ENCODE measurements at regions of chr3 and their contacts with region 1.

Region 1: GRCh38 chr3:112531358-112531781 is 30.4 kb downstream of the ATG3 start:
- DNase-seq: peak; percentile 3
- ATAC-seq: no peak
- H3K4me3 ChIP-seq: no peak overlapping the region
- H3K27ac ChIP-seq: no peak overlapping the region
- H3K4me1 ChIP-seq: no peaks in the 10 kb centered on the region
- H3K27me3 ChIP-seq: no peaks in the 10 kb centered on the region
- CTCF ChIP-seq: peak; percentile 39
- EP300 ChIP-seq: no peak
- POLR2A ChIP-seq: no peak
- RAD21 ChIP-seq: no peak

Region 2: DNA sequence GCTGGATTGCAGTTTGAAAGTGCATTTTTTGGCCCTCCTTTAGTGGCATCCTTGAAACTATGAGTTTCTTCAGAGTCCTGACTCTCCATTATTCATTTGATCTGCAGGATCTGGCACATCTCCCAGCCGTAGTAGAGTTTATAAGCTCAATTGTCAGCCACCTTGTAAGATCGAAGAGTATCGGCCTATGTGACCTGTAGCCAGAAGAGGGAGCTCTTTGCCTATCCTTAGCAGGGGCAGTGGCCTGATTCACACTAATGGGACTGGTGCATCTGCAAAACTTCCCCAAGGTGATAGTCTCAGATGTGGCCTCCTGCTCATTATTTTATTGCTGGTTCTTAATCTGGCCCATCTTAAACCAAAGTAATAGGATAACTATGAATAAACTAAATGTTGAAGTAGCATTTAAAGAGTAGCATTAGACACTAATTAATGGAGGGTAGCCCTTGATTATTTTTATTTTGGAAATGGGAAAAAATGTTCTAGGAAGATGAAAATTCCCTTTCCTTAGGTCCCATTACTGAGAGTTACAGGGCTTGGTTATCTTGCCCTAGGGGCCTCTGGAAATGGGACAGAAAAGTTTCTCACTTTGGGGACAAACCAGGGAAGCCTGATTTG is 419.5 kb before region 1 on chr3:
- CTCF ChIA-PET with region 1: interaction called, 6 read pairs
- POLR2A ChIA-PET with region 1: no interaction called
- in situ Hi-C with region 1: loop called (anchors 10 kb)
- intact Hi-C with region 1: no loop called
- DNase-seq: peak; percentile 33
- ATAC-seq: peak; percentile 95
- H3K4me3 ChIP-seq: no peak overlapping the region
- H3K27ac ChIP-seq: no peak overlapping the region
- H3K4me1 ChIP-seq: peaks cover 9% of the 10 kb centered on the region
- H3K27me3 ChIP-seq: no peaks in the 10 kb centered on the region
- CTCF ChIP-seq: peak; percentile 83
- EP300 ChIP-seq: no peak
- POLR2A ChIP-seq: no peak
- RAD21 ChIP-seq: no peak

Region 3: GRCh38 chr3:112136959-112137693 is 394.2 kb before region 1 on chr3:
- CTCF ChIA-PET with region 1: interaction called, 7 read pairs
- POLR2A ChIA-PET with region 1: no interaction called
- in situ Hi-C with region 1: no loop called
- intact Hi-C with region 1: loop called (anchors 1 kb)
- DNase-seq: peak; percentile 42
- ATAC-seq: peak; percentile 87
- H3K4me3 ChIP-seq: no peak overlapping the region
- H3K27ac ChIP-seq: no peak overlapping the region
- H3K4me1 ChIP-seq: no peaks in the 10 kb centered on the region
- H3K27me3 ChIP-seq: no peaks in the 10 kb centered on the region; a peak in 1 of 5 replicates
- CTCF ChIP-seq: peak; percentile 70
- EP300 ChIP-seq: no peak
- POLR2A ChIP-seq: no peak
- RAD21 ChIP-seq: 0 out of 2 replicates have a peak, but pooled peaks have one; percentile 29

Region 4: DNA sequence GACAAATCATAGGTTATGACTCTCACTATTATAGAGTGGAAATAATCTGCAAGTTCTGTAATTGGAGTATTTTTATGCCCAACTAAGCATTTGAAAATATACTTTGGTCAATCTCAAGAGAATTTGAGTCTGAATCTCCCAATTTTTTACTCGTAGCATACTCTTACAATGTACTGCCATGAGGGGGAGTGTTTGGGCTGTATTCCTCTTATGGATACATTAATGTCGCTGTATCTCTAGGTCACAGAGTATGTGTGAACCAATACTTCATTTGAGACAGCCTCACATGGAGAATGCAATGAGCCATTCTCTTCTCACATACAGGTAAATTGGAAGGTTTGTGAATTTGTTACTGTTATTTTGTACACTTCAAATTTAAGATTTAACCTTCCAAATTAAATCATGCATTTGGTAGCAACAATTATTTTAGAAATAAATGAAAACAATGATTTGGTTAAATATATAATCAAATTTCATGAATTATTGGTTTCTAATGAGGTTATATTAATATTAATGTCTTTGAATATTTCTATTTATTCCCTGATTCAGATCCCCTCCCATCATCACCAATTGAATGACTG is 203.9 kb before region 1 on chr3:
- CTCF ChIA-PET with region 1: no interaction called
- POLR2A ChIA-PET with region 1: no interaction called
- in situ Hi-C with region 1: loop called (anchors 10 kb)
- intact Hi-C with region 1: loop called (anchors 5 kb)
- DNase-seq: peak; percentile 39
- ATAC-seq: peak; percentile 94
- H3K4me3 ChIP-seq: no peak overlapping the region
- H3K27ac ChIP-seq: no peak overlapping the region
- H3K4me1 ChIP-seq: no peaks in the 10 kb centered on the region
- H3K27me3 ChIP-seq: no peaks in the 10 kb centered on the region
- CTCF ChIP-seq: peak; percentile 41
- EP300 ChIP-seq: no peak
- POLR2A ChIP-seq: no peak
- RAD21 ChIP-seq: peak; percentile 42; the same call in 1 of the 2 replicates

Region 5: DNA sequence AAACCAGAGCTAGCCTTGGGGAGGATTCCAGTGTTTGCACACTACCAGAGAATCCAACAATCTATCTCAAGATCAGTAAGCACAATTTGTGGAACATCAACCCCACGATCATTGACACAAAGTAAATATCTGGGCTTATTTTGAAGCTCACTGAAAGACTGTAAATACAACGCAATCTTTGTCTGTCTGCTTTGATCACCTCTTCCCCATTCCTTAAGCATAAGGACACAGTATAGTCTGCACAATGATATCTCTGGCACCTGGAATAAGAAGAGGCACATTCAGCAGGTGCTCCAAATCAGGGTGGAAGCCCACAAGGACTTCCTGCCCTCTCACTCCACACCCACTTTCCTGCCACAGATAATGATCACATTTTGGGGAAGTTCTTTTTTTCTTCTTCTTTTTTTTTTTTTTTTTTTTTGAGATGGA is 58.1 kb before region 1 on chr3:
- CTCF ChIA-PET with region 1: no interaction called
- POLR2A ChIA-PET with region 1: no interaction called
- in situ Hi-C with region 1: no loop called
- intact Hi-C with region 1: no loop called
- DNase-seq: peak; percentile 70
- ATAC-seq: peak; percentile 78
- H3K4me3 ChIP-seq: no peak overlapping the region
- H3K27ac ChIP-seq: no peak overlapping the region
- H3K4me1 ChIP-seq: peaks cover 20% of the 10 kb centered on the region
- H3K27me3 ChIP-seq: no peaks in the 10 kb centered on the region
- CTCF ChIP-seq: no peak
- EP300 ChIP-seq: no peak
- POLR2A ChIP-seq: no peak
- RAD21 ChIP-seq: no peak

Region 6: DNA sequence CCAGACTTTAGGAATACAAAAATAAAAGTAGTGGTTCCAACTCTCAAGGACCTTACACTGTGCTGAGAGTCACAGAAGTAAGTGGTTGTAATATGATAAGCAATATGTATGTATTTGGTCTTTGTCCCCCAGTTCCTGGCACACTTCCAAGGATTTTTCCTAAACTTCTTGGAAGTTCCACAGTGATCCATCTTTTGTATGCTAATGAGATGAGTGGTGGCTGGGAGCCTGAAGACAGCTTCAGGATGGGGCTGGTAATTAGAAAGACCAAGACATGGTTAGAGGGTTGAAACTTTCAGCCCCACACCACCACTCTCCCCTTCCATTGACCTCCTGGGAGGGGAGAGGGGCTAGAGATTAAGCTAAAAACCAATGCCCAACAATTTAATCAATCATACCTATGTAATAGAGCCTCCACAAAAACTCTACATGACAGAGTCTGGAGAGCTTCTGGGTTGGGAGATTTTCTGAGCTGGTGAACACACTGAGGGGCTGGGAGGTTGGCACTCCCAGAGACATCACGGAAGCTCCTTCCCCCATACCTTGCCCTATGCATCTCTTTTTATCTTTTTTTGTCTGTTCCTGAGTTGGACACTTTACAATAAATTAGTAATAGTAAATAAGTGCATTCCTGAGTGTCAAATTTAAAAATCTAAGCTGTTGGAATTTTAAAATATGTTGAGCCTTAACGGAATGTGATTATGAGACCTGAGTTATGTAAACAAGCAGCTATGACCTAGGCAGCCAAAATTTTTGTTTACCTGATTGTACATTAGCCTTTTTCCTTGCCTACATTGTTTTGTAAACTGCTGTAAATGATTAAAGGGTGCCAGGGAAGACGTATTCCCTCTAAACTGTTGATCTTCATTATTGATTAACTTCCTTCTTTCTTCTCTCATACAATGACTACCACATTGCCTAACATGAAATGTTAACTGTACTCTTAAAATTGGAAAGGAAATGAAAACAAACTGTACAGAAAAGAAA is 291.0 kb after region 1 on chr3:
- CTCF ChIA-PET with region 1: no interaction called
- POLR2A ChIA-PET with region 1: no interaction called
- in situ Hi-C with region 1: no loop called
- intact Hi-C with region 1: no loop called
- DNase-seq: no peak
- ATAC-seq: peak; percentile 70
- H3K4me3 ChIP-seq: no peak overlapping the region
- H3K27ac ChIP-seq: no peak overlapping the region
- H3K4me1 ChIP-seq: peaks cover 12% of the 10 kb centered on the region; the same call in 1 of the 2 replicates
- H3K27me3 ChIP-seq: no peaks in the 10 kb centered on the region
- CTCF ChIP-seq: no peak
- EP300 ChIP-seq: no peak
- POLR2A ChIP-seq: no peak
- RAD21 ChIP-seq: no peak

Measured in HepG2 (cell line).